ENCODE measurements at regions of chr6 and their contacts with region 1.

Region 1: DNA sequence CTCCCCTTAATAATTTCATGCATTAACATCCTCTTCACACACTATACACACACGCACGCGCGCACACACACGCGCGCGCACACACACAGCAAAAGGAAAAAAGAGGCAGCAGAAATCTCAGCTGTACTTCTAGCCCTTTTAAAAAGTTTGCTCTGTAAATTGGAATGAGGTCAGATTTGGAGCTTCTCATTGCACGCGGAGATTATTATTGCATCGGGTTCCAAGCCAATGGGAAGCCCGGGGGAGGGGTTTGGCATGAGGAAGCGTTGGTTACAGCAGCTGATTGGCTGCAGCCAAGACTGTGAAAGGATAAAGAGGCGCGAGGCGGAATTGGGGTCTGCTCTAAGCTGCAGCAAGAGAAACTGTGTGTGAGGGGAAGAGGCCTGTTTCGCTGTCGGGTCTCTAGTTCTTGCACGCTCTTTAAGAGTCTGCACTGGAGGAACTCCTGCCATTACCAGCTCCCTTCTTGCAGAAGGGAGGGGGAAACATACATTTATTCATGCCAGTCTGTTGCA is at the start of gene SOX4:
- DNase-seq: peak; percentile 86 to 94
- ATAC-seq: peak; percentile 70 to 83
- H3K4me3 ChIP-seq: peak within 1 kb of the TSS; percentile 83
- H3K27ac ChIP-seq: peak within 1 kb of the TSS; percentile 96 to 97
- H3K4me1 ChIP-seq: peaks cover 16% of the 10 kb centered on the region; the same call in 2 of the 3 replicates
- CTCF ChIP-seq: no peak
- EP300 ChIP-seq: no peak
- POLR2A ChIP-seq: peak; percentile 98
- RAD21 ChIP-seq: no peak
- polyA plus RNA-seq, gene SOX4: 26.0 and 26.2 TPM in 2 replicates

Region 2: DNA sequence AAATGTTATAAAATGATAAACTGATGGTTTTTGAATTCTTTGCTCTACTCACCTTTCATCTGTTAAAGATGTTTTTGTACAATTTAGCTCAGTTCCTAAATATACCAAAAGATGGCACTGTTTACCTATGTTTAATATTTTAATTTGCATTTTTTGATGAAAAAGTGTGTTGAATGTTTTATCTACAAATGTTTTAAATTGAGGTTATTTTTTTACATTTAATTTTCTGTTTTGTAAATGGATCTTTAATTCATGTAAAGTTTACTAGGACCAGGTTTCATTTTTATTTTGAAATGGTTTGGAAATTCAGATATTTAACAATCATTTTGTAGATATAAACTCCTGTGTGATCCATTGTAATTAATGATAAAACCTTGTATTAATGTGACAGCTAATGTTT is 1029.2 kb before region 1 on chr6:
- CTCF ChIA-PET with region 1: interaction called, 43 read pairs
- POLR2A ChIA-PET with region 1: interaction called, 5 read pairs
- DNase-seq: peak in 1 of 2 experiments; percentile 6
- ATAC-seq: no peak
- H3K4me3 ChIP-seq: no peak overlapping the region
- H3K27ac ChIP-seq: peak overlapping the region in 1 of 2 experiments; percentile 57; a peak in 3 of 6 replicates
- H3K4me1 ChIP-seq: peaks cover 11% of the 10 kb centered on the region
- CTCF ChIP-seq: peak; percentile 47; the same call in 2 of the 3 replicates
- EP300 ChIP-seq: no peak
- POLR2A ChIP-seq: no peak
- RAD21 ChIP-seq: peak; percentile 57 to 78

Region 3: DNA sequence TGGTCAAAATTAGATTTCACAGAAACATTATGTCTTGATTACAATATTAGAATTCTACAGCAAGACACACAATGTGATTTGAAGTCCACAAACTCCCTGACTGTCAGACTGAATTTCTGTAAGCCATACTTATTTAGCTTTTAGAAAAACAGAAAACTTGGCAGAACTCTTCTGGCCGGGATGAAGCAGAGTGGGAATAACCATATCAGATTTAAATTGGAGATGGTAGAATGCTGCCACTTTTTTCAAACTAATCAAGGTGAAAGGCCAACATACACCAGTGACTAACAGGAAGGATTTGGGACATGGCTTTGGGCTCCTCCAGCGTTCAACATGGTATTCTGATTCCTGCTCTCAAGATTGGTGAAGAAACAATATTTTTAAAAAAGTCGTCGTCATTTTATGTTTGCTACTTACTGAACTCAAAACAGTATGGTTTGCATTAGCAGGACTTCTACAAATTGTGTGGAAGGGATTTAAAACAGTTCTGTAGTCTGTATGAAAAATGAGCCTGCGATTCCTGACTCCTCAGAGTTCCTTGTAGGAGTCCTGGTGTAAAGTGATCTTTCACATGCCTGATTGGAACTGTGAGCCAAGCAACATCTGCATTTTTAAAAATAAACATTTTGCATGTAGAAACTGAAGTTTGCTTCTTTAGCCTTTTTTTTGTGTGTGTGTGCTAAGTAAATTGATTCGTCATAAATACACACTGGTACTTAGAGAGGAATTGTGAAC is 297.8 kb before region 1 on chr6:
- CTCF ChIA-PET with region 1: no interaction called
- POLR2A ChIA-PET with region 1: no interaction called
- DNase-seq: no peak
- ATAC-seq: no peak
- H3K4me3 ChIP-seq: no peak overlapping the region
- H3K27ac ChIP-seq: no peak overlapping the region
- H3K4me1 ChIP-seq: no peaks in the 10 kb centered on the region
- CTCF ChIP-seq: no peak
- EP300 ChIP-seq: no peak
- POLR2A ChIP-seq: no peak
- RAD21 ChIP-seq: no peak

Region 4: DNA sequence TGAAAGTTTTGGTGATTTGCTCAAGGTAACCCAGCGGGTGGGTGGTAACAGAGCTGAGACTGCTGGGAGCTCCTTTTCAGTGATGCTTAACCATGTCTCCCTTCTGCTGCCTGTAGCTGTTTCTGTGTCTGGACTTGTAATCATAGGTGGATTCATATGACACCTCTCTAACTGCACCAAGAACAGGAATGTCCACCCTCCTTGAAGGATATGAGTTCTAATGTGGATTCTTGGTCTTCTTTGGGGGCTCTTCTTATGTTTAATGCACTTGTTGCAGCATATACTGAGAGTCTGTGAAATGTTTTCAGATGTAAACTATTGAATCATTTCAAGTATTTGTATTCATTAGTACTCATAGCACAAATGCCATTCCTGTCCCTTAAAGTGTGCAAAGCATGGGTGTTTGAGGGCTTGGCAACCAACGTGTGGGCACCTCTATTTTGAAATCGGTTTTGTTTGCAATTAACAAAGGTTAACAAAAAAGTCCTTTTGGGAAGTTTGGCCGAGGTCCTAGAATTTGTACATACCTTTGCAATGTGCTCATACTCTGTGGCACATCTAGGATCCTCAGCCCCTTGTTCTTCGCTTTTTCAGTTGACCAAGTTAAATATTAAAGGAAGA is 138.1 kb after region 1 on chr6:
- CTCF ChIA-PET with region 1: interaction called, 3 read pairs
- POLR2A ChIA-PET with region 1: interaction called, 22 read pairs
- DNase-seq: peak; percentile 45 to 81
- ATAC-seq: peak; percentile 89 to 95
- H3K4me3 ChIP-seq: no peak overlapping the region
- H3K27ac ChIP-seq: peak overlapping the region; percentile 76 to 87
- H3K4me1 ChIP-seq: peaks cover 40% of the 10 kb centered on the region
- CTCF ChIP-seq: no peak
- EP300 ChIP-seq: peak; percentile 62 to 80; a peak in 3 of 5 replicates
- POLR2A ChIP-seq: no peak
- RAD21 ChIP-seq: peak in 1 of 2 experiments; percentile 35; a peak in 1 of 5 replicates

Region 5: DNA sequence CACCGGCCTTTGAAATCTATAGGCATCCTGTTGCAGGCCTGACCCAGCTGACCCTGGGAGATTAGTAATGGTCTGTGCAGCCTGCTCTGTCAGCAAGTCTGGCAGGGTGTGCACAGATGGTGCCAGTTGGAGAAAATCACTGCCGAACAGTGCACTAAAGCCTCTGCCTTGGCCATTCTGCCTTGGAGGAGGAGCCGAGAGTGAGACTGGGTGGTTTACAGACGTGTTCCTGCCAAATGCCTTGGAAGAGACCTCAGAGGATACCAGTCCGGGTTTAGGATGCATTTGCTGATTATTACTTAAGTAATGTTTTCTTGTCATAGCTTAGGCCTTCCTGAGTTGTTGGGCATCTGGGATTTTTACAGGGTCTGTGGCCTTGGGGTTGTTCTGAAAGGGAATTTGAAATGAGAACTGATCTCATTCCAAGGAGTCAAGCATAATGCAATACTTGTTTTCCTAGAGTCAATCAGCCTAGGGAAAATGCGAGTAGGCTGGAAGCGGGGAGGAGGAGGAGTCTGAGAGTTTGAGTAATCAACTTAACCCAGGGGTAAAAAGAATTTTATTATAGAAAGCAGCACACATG is 292.2 kb after region 1 on chr6:
- CTCF ChIA-PET with region 1: interaction called, 3 read pairs
- POLR2A ChIA-PET with region 1: interaction called, 36 read pairs
- DNase-seq: peak; percentile 15 to 79
- ATAC-seq: peak; percentile 81 to 88
- H3K4me3 ChIP-seq: no peak overlapping the region; the same call in 2 of the 3 replicates
- H3K27ac ChIP-seq: peak overlapping the region; percentile 93 to 99
- H3K4me1 ChIP-seq: peaks cover 44% of the 10 kb centered on the region
- CTCF ChIP-seq: no peak
- EP300 ChIP-seq: peak in 1 of 2 experiments; percentile 75; a peak in 2 of 5 replicates
- POLR2A ChIP-seq: no peak
- RAD21 ChIP-seq: peak in 1 of 2 experiments; percentile 44; a peak in 3 of 5 replicates

Region 6: GRCh38 chr6:21999012-21999528 is 405.6 kb after region 1 on chr6:
- CTCF ChIA-PET with region 1: no interaction called
- POLR2A ChIA-PET with region 1: no interaction called
- DNase-seq: no peak
- ATAC-seq: no peak
- H3K4me3 ChIP-seq: no peak overlapping the region
- H3K27ac ChIP-seq: 0 out of 6 replicates have a peak overlapping the region, but pooled peaks of 1 of the 2 experiments have one; percentile 26
- H3K4me1 ChIP-seq: peaks cover 6% of the 10 kb centered on the region; the same call in 2 of the 3 replicates
- CTCF ChIP-seq: no peak
- EP300 ChIP-seq: no peak
- POLR2A ChIP-seq: no peak
- RAD21 ChIP-seq: no peak

Region 7: GRCh38 chr6:22236626-22237414 is 643.4 kb after region 1 on chr6:
- CTCF ChIA-PET with region 1: no interaction called
- POLR2A ChIA-PET with region 1: interaction called, 28 read pairs
- DNase-seq: peak; percentile 55 to 92
- ATAC-seq: peak; percentile 97 to 99
- H3K4me3 ChIP-seq: peak overlapping the region; percentile 16; the same call in 2 of the 3 replicates
- H3K27ac ChIP-seq: peak overlapping the region; percentile 84 to 86
- H3K4me1 ChIP-seq: peaks cover 24% of the 10 kb centered on the region
- CTCF ChIP-seq: no peak
- EP300 ChIP-seq: peak; percentile 58 to 78; a peak in 3 of 5 replicates
- POLR2A ChIP-seq: no peak
- RAD21 ChIP-seq: peak; percentile 19 to 47; a peak in 4 of 5 replicates